Lower leg skin (tissue), 4 donors: ENCODE measurements at regions of chr20 and their contacts with region 1.

Region 1: DNA sequence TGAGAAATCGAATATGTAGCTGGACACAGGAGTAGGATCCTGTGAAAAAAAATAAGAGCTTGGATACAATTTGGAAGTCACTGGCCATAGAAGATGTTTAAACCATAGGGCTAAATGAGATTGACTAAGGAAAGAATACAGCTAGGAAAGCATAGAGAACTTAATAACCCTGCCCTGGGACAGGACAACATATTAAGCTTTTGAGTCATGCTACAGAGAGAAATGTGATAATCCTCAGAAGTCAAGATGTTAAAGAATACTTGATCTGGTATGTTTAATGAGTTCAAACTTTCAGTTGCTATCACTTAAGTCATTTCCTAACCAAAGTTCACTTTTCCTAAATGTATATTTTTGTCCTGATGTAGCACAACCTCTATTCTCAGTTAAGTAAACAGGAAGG is 154.6 kb upstream of the TSHZ2 start:
- DNase-seq: no peak
- H3K4me3 ChIP-seq: no peak overlapping the region
- CTCF ChIP-seq: no peak
- POLR2A ChIP-seq: no peak

Region 2: GRCh38 chr20:52060794-52061714 is 756.5 kb before region 1 on chr20:
- intact Hi-C with region 1: loop called (anchors 5 kb)
- DNase-seq: no peak
- H3K4me3 ChIP-seq: no peak overlapping the region
- CTCF ChIP-seq: no peak
- POLR2A ChIP-seq: no peak

Region 3: DNA sequence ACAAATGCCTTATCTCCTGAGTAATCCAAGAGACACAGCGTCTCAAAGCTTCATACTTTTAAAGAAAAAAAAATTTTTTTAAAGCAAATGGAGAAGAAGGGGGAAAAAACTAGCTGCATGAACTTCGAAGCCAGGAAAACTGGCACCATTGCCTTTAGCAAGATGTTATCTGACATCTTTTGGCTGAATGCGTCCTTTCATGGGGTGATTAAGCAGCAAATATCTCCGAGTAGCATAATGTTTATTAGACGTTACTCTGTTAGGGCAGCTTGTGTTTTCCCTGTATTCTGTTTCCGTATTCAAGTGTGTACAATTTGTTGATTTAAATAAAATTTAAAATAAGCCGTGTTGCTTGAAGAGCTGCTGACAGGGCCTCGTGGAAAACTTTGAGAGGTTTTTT is 78.2 kb after region 1 on chr20:
- intact Hi-C with region 1: no loop called
- DNase-seq: no peak
- H3K4me3 ChIP-seq: no peak overlapping the region
- CTCF ChIP-seq: no peak
- POLR2A ChIP-seq: no peak